IMR-90 (cell line): ENCODE measurements at regions of chr12 and their contacts with region 1.

Region 1: DNA sequence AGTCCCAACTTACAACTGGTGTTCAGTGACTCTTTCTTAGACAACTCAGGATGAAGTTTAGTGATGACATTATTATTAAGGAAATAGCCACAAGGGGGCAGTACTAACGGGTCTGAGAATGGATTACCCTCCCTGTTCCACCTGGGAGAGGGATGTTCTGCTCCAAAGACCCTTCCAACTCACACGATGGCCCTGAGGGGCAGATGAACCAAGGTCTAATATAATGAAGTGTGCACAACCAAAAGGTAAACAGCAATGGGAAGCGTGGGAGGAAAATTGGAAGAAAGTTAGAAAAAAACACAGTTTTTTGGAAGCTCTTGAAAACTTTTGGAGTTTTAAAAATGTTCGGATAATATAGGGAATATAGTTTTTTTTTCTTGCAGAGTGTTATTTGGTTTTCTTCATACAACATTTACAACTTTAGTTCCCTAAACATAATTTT is 24.0 kb downstream of the FGF6 start:
- DNase-seq: peak; percentile 36
- ATAC-seq: peak; percentile 65
- H3K4me3 ChIP-seq: no peak overlapping the region
- H3K27ac ChIP-seq: no peak overlapping the region
- H3K4me1 ChIP-seq: no peaks in the 10 kb centered on the region
- H3K27me3 ChIP-seq: peaks cover 10% of the 10 kb centered on the region
- CTCF ChIP-seq: peak; percentile 56
- POLR2A ChIP-seq: no peak
- RAD21 ChIP-seq: peak; percentile 43

Region 2: GRCh38 chr12:4307593-4308333 is 113.8 kb before region 1 on chr12:
- CTCF ChIA-PET with region 1: no interaction called
- POLR2A ChIA-PET with region 1: no interaction called
- dilution Hi-C with region 1: no loop called
- in situ Hi-C with region 1: no loop called
- intact Hi-C with region 1: loop called (anchors 2 kb)
- DNase-seq: peak; percentile 79
- ATAC-seq: peak; percentile 99
- H3K4me3 ChIP-seq: no peak overlapping the region
- H3K27ac ChIP-seq: no peak overlapping the region
- H3K4me1 ChIP-seq: no peaks in the 10 kb centered on the region
- H3K27me3 ChIP-seq: peaks cover 12% of the 10 kb centered on the region
- CTCF ChIP-seq: peak; percentile 76
- POLR2A ChIP-seq: no peak
- RAD21 ChIP-seq: peak; percentile 78

Region 3: GRCh38 chr12:4471256-4471655 is 49.6 kb after region 1 on chr12:
- CTCF ChIA-PET with region 1: no interaction called
- POLR2A ChIA-PET with region 1: no interaction called
- dilution Hi-C with region 1: no loop called
- in situ Hi-C with region 1: no loop called
- intact Hi-C with region 1: no loop called
- DNase-seq: no peak
- ATAC-seq: no peak
- H3K4me3 ChIP-seq: no peak overlapping the region
- H3K27ac ChIP-seq: no peak overlapping the region
- H3K4me1 ChIP-seq: no peaks in the 10 kb centered on the region
- H3K27me3 ChIP-seq: no peaks in the 10 kb centered on the region; the same call in 1 of the 2 replicates
- CTCF ChIP-seq: no peak
- POLR2A ChIP-seq: no peak
- RAD21 ChIP-seq: no peak

Region 4: DNA sequence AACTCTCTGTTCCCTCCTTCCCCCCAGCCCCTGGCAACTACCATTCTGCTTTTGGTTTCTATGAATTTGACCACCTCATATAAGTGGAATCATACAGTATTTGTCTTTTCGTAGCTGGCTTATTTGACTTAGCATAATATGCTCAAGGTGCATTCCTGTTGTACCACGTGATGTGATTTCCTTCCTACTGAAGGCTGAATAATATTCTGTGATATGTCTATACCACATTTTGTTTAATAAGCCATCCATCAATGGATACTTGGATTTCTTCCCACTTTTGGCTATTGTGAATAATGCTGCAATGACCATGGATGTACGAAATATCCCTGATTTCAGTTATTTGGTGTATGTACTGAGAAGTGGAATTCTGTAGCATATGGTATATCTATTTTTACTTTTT is 243.6 kb after region 1 on chr12:
- CTCF ChIA-PET with region 1: no interaction called
- POLR2A ChIA-PET with region 1: no interaction called
- dilution Hi-C with region 1: no loop called
- in situ Hi-C with region 1: no loop called
- intact Hi-C with region 1: no loop called
- DNase-seq: peak; percentile 8
- ATAC-seq: no peak
- H3K4me3 ChIP-seq: no peak overlapping the region
- H3K27ac ChIP-seq: no peak overlapping the region
- H3K4me1 ChIP-seq: peaks cover 3% of the 10 kb centered on the region
- H3K27me3 ChIP-seq: no peaks in the 10 kb centered on the region
- CTCF ChIP-seq: no peak
- POLR2A ChIP-seq: no peak
- RAD21 ChIP-seq: no peak